ENCODE measurements at regions of chr17 and their contacts with region 1.

Region 1: GRCh38 chr17:36948717-36949460 is at the start of gene AATF:
- DNase-seq: peak; percentile 96
- H3K4me3 Mint-ChIP-seq: peak within 1 kb of the TSS; percentile 93
- H3K27ac Mint-ChIP-seq: peak within 1 kb of the TSS; percentile 87
- H3K4me1 Mint-ChIP-seq: peaks cover 39% of the 10 kb centered on the region
- H3K27me3 Mint-ChIP-seq: peaks cover 28% of the 10 kb centered on the region
- total RNA-seq, gene AATF: 58.9 to 69.8 TPM

Region 2: GRCh38 chr17:36534117-36534839 is 414.6 kb before region 1 on chr17:
- CTCF ChIA-PET with region 1: no interaction called
- intact Hi-C with region 1: no loop called
- DNase-seq: peak; percentile 53
- H3K4me3 Mint-ChIP-seq: peak overlapping the region; percentile 98
- H3K27ac Mint-ChIP-seq: peak overlapping the region; percentile 96
- H3K4me1 Mint-ChIP-seq: peaks cover 45% of the 10 kb centered on the region
- H3K27me3 Mint-ChIP-seq: no peaks in the 10 kb centered on the region

Region 3: DNA sequence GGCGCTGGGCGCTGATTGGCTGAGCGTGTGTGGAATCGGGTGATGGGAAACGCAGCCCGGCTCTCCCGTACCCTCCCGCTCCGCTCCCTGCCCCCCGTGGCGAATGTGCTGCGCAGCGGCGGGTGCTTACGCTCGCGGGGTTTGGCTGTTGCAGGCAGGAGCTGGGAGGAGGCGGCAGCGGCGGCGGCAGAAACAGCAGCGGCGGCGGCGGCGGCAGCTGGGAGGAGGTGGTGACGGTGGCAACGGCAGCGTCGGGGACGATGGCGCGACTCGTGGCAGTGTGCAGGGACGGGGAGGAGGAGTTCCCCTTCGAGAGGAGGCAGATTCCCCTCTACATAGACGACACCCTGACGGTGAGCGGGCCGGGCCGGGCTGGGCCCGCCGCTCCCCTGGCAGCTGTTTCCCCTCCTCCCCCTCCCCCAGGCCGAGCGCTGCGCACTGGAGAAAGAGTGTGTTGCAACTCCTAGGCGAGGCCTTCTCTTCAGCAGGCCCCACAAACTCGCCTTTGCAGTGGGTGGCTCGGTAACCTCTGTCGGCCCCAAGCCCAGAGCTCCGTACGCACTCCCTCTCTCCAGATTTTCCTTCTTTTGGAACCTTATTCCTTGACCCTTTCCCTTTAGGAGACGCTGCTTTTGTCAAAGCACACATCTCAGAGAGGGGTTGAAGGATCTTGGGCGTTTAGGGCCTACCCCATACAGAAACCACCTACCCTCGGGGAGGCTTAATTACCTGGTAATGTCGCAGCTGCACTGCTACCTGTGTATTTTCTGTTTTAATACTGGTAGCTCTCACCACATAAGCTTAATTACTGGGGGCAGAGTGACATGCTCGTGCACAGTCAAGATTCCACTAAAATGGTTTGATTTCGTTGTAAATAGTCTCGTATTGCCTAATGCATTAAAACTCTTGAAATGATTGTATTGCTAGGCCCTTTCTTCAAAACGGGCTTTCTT is 403.1 kb before region 1 on chr17:
- CTCF ChIA-PET with region 1: no interaction called
- intact Hi-C with region 1: loop called (anchors 10 kb)
- DNase-seq: peak; percentile 98
- H3K4me3 Mint-ChIP-seq: peak overlapping the region; percentile 86
- H3K27ac Mint-ChIP-seq: peak overlapping the region; percentile 94
- H3K4me1 Mint-ChIP-seq: peaks cover 44% of the 10 kb centered on the region
- H3K27me3 Mint-ChIP-seq: no peaks in the 10 kb centered on the region

Region 4: DNA sequence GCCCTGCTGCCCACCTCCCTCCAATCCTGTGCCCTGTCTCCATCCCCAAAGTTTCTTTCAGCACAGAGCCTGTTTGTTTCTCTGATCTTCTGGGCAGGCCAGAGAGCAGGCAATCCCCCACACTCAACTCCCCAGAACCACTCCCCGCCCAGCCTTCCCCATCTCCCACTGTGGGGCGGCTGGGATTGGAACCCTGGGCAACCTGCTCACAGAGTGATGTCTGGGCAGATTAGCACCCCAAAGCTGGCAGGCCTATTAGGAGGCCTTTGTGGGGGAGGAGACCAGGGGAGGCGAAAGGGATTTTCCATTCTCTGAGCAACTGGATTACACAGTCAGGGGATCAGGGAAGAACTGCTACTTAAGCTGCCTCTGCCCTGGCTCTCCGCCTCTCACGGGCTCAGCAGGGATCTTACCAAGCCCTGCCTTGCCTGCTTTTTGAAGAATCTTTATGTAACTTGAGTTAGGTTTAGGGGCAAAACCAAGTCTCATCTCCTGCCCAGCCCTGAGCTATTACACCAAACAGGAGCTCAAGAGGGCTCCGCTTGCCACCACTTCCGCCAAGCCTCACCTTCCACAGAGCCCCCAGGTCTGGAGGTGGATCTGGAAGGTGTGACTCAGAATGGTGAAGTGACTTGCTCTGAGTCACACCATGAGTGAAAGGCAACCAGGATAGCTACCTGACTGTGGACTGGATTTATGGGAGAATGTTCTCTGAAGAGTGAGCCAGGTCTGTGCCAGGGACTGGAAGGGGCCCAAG is 27.6 kb before region 1 on chr17:
- CTCF ChIA-PET with region 1: interaction called, 3 read pairs
- intact Hi-C with region 1: loop called (anchors 2 kb)
- DNase-seq: peak; percentile 79
- H3K4me3 Mint-ChIP-seq: no peak overlapping the region
- H3K27ac Mint-ChIP-seq: peak overlapping the region; percentile 54
- H3K4me1 Mint-ChIP-seq: peaks cover 21% of the 10 kb centered on the region
- H3K27me3 Mint-ChIP-seq: peaks cover 35% of the 10 kb centered on the region

Region 5: GRCh38 chr17:37025847-37026530 is 77.1 kb after region 1 on chr17:
- CTCF ChIA-PET with region 1: no interaction called
- intact Hi-C with region 1: loop called (anchors 2 kb)
- DNase-seq: peak; percentile 46
- H3K4me3 Mint-ChIP-seq: no peak overlapping the region
- H3K27ac Mint-ChIP-seq: no peak overlapping the region
- H3K4me1 Mint-ChIP-seq: peaks cover 20% of the 10 kb centered on the region
- H3K27me3 Mint-ChIP-seq: no peaks in the 10 kb centered on the region

Measured in activated naive CD4-positive, alpha-beta T cell treated with anti-CD3 and anti-CD28 coated beads for 36 hours (primary cell).